ENCODE measurements at regions of chr3 and their contacts with region 1.

Region 1: GRCh38 chr3:10248184-10249080 is at the start of gene TATDN2:
- DNase-seq: peak; percentile 99
- H3K4me3 ChIP-seq: peak within 1 kb of the TSS; percentile 58 to 85 (median 64)
- H3K27ac ChIP-seq: peak within 1 kb of the TSS; percentile 84 to 95 (median 87)
- H3K4me1 ChIP-seq: peaks cover 0 to 31% (median 28%) of the 10 kb centered on the region in 4 donors
- H3K27me3 ChIP-seq: no peaks in the 10 kb centered on the region
- CTCF ChIP-seq: no peak
- EP300 ChIP-seq: peak in 1 of 4 donors; percentile 57
- POLR2A ChIP-seq: peak in 1 of 2 donors; percentile 28
- total RNA-seq, gene TATDN2: 11.2 to 23.3 (median 12.6) TPM

Region 2: GRCh38 chr3:10142707-10143566 is 105.5 kb before region 1 on chr3:
- intact Hi-C with region 1: loop called (anchors 2 kb)
- DNase-seq: no peak
- H3K4me3 ChIP-seq: peak overlapping the region; percentile 53 to 77 (median 65)
- H3K27ac ChIP-seq: peak overlapping the region; percentile 92 to 95 (median 94)
- H3K4me1 ChIP-seq: peaks cover 0 to 41% (median 31%) of the 10 kb centered on the region in 4 donors
- H3K27me3 ChIP-seq: no peaks in the 10 kb centered on the region
- CTCF ChIP-seq: no peak
- EP300 ChIP-seq: no peak
- POLR2A ChIP-seq: no peak

Region 3: GRCh38 chr3:10322352-10322710 is 73.9 kb after region 1 on chr3:
- intact Hi-C with region 1: loop called (anchors 5 kb)
- DNase-seq: no peak
- H3K4me3 ChIP-seq: no peak overlapping the region
- H3K27ac ChIP-seq: no peak overlapping the region
- H3K4me1 ChIP-seq: peaks cover 0 to 26% (median 21%) of the 10 kb centered on the region in 4 donors
- H3K27me3 ChIP-seq: no peaks in the 10 kb centered on the region
- CTCF ChIP-seq: no peak
- EP300 ChIP-seq: no peak
- POLR2A ChIP-seq: no peak

Region 4: DNA sequence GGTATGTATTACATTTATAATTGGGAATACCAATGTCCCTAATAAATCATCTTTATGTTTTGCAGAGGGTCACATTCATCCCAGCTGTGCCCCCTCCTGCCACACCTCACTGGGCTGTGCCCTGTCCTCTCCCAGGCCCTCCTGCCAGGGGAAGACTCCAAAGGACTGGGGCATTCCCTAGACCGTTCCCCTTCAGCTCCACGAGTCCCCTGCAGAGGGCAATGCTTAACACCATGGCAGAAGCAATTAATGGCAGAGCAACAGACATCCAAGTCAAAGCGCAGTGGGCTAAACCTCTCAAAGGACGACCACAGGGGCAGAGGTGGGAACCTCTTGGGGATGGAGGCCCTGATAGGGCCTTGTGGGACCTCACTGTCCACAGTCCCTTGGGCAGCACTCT is 143.8 kb after region 1 on chr3:
- intact Hi-C with region 1: no loop called
- DNase-seq: no peak
- H3K4me3 ChIP-seq: no peak overlapping the region
- H3K27ac ChIP-seq: no peak overlapping the region
- H3K4me1 ChIP-seq: no peaks in the 10 kb centered on the region
- H3K27me3 ChIP-seq: no peaks in the 10 kb centered on the region
- CTCF ChIP-seq: no peak
- EP300 ChIP-seq: no peak
- POLR2A ChIP-seq: no peak

Measured in sigmoid colon (tissue), 7 donors.